ENCODE measurements at regions of chr17 and their contacts with region 1.

Region 1: GRCh38 chr17:80791758-80792284 is 199.8 kb upstream of the CHMP6 start:
- DNase-seq: peak; percentile 65
- ATAC-seq: peak; percentile 11
- H3K4me3 Mint-ChIP-seq: peak overlapping the region; percentile 71
- H3K27ac Mint-ChIP-seq: peak overlapping the region; percentile 97
- H3K4me1 Mint-ChIP-seq: peaks cover 75% of the 10 kb centered on the region
- H3K27me3 Mint-ChIP-seq: no peaks in the 10 kb centered on the region

Region 2: GRCh38 chr17:80773243-80773991 is 18.4 kb before region 1 on chr17:
- CTCF ChIA-PET with region 1: interaction called, 18 read pairs
- POLR2A ChIA-PET with region 1: interaction called, 6 read pairs
- DNase-seq: no peak
- ATAC-seq: peak; percentile 53
- H3K4me3 Mint-ChIP-seq: no peak overlapping the region
- H3K27ac Mint-ChIP-seq: peak overlapping the region; percentile 94
- H3K4me1 Mint-ChIP-seq: peaks cover 75% of the 10 kb centered on the region
- H3K27me3 Mint-ChIP-seq: no peaks in the 10 kb centered on the region

Region 3: DNA sequence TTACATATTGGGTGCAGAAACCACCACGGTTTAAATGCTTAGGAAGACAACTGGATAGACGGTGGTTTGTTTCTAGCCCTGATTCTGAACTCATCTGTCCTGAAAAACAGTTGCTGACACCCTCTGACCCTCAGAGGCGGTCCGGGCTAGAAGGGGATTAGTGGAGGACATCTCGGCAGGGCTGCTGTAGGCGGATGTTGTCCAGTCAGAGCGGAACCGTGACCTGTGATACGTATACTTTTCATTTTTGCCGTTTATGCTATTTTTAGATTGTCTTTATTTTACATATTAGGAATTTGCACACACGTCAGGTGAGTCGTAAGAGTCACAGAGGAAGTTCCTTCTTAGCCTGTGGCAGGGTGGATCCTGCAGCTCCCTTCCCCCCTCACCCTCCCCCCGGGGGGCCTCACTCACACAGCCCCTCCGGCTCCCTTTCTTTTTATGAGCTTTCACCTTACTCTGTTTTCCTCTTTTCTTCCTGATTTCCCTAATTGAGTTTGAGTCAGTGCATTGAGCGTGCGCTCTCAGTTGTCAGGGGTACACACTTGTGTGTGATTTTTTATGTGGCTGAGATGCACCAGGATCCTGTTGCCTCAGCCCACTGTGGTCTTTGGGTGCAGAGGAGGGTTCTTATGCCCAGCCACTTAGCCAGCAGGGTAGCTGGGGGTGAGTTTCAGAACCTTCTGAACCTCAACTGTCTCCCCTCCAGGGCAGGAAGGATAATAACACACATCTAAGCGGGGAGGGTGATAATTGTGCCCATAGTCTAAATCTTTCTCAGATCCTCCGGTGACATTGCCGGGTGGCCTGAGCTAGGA is 11.2 kb before region 1 on chr17:
- CTCF ChIA-PET with region 1: interaction called, 44 read pairs
- POLR2A ChIA-PET with region 1: interaction called, 41 read pairs
- DNase-seq: peak; percentile 76
- ATAC-seq: peak; percentile 73
- H3K4me3 Mint-ChIP-seq: peak overlapping the region; percentile 52
- H3K27ac Mint-ChIP-seq: peak overlapping the region; percentile 90
- H3K4me1 Mint-ChIP-seq: peaks cover 85% of the 10 kb centered on the region
- H3K27me3 Mint-ChIP-seq: no peaks in the 10 kb centered on the region

Region 4: DNA sequence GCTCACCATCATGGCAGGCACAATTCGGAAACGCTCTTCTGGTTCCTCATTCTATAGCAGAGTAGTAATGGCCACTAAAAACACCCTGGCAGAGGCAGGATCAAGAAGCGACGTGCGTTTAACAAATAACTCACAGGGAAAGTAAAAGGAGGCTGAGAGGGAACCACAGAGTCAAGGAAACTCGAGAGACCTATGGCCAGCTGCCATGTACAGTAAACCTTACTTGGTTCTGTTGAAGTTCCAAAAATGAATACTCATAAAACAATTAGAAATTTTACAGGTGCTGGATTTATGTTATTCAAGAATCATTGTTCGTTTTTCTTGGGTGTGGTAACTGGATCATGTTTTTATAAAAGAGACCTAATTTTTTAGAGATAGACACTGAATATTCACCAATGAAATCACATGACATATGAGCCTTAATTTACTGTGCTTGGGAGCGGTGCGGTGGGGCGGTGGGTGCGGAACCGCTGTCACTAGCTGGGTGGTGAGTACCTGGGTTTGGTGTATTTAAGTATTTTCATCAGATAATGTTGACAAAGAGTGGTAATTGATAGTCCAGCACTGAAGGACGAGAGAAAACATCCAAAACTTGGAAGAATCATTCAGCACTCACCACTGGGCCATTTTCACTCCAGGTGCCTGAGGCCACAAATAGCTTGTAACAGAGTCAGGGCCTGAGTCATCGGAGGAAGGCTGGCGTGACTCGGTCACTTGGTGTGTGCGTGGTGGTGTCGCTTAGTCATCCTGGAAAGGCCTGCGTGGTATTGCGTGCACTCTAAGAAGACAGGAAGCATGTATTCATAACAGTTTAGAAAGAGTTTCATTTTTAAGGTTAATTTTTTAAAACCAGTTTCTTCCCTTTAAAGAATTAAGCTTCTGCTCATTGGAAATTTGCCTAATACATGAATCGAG is 64.4 kb after region 1 on chr17:
- CTCF ChIA-PET with region 1: interaction called, 7 read pairs
- POLR2A ChIA-PET with region 1: interaction called, 18 read pairs
- DNase-seq: peak; percentile 93
- ATAC-seq: peak; percentile 95
- H3K4me3 Mint-ChIP-seq: peak overlapping the region; percentile 54
- H3K27ac Mint-ChIP-seq: peak overlapping the region; percentile 94
- H3K4me1 Mint-ChIP-seq: peaks cover 97% of the 10 kb centered on the region
- H3K27me3 Mint-ChIP-seq: no peaks in the 10 kb centered on the region

Measured in activated CD8-positive, alpha-beta T cell treated with anti-CD3 and anti-CD28 coated beads, Interleukin-2, amount 10 ng/mL, durations not matched to agents 7 days and 5 days (primary cell).